ENCODE measurements at regions of chr2 and their contacts with region 1.

Region 1: GRCh38 chr2:42886921-42887320 is 94.5 kb upstream of the HAAO start:
- DNase-seq: peak; percentile 47
- ATAC-seq: no peak
- H3K4me3 ChIP-seq: no peak overlapping the region
- H3K27ac ChIP-seq: no peak overlapping the region
- H3K4me1 ChIP-seq: peaks cover 1% of the 10 kb centered on the region; the same call in 1 of the 2 replicates
- H3K27me3 ChIP-seq: no peaks in the 10 kb centered on the region; the same call in 1 of the 2 replicates
- CTCF ChIP-seq: no peak
- POLR2A ChIP-seq: no peak
- RAD21 ChIP-seq: no peak

Region 2: DNA sequence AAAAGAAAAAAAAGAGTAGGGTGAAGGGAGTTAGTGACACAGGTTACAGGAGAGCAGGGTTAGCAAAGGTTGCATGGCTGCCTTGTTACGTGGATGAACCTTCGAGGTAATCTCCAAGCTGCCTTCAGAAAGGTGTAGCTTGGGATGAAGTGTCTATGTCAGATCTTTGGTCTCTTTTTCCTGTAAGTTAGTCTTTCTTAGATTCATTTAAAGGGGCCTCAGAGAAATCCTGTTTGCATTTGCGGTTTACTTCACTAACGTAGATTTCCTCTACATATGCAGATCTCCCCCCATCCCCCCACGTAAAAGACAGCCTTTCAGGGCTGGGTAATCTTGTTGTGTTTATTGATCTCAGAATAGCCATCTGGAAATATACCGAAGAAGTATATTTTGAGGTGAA is 234.8 kb before region 1 on chr2:
- CTCF ChIA-PET with region 1: no interaction called
- POLR2A ChIA-PET with region 1: no interaction called
- dilution Hi-C with region 1: no loop called
- in situ Hi-C with region 1: no loop called
- intact Hi-C with region 1: no loop called
- DNase-seq: no peak
- ATAC-seq: no peak
- H3K4me3 ChIP-seq: no peak overlapping the region
- H3K27ac ChIP-seq: no peak overlapping the region
- H3K4me1 ChIP-seq: peaks cover 2% of the 10 kb centered on the region
- H3K27me3 ChIP-seq: no peaks in the 10 kb centered on the region
- CTCF ChIP-seq: no peak
- POLR2A ChIP-seq: no peak
- RAD21 ChIP-seq: no peak

Region 3: GRCh38 chr2:42871370-42871769 is 15.6 kb before region 1 on chr2:
- CTCF ChIA-PET with region 1: no interaction called
- POLR2A ChIA-PET with region 1: no interaction called
- dilution Hi-C with region 1: no loop called
- in situ Hi-C with region 1: no loop called
- intact Hi-C with region 1: loop called (anchors 2 kb)
- DNase-seq: no peak
- ATAC-seq: no peak
- H3K4me3 ChIP-seq: no peak overlapping the region
- H3K27ac ChIP-seq: no peak overlapping the region
- H3K4me1 ChIP-seq: no peaks in the 10 kb centered on the region; the same call in 1 of the 2 replicates
- H3K27me3 ChIP-seq: 0 out of 2 replicates have a peak, but pooled peaks cover 2% of the 10 kb centered on the region
- CTCF ChIP-seq: no peak
- POLR2A ChIP-seq: no peak
- RAD21 ChIP-seq: no peak

Region 4: DNA sequence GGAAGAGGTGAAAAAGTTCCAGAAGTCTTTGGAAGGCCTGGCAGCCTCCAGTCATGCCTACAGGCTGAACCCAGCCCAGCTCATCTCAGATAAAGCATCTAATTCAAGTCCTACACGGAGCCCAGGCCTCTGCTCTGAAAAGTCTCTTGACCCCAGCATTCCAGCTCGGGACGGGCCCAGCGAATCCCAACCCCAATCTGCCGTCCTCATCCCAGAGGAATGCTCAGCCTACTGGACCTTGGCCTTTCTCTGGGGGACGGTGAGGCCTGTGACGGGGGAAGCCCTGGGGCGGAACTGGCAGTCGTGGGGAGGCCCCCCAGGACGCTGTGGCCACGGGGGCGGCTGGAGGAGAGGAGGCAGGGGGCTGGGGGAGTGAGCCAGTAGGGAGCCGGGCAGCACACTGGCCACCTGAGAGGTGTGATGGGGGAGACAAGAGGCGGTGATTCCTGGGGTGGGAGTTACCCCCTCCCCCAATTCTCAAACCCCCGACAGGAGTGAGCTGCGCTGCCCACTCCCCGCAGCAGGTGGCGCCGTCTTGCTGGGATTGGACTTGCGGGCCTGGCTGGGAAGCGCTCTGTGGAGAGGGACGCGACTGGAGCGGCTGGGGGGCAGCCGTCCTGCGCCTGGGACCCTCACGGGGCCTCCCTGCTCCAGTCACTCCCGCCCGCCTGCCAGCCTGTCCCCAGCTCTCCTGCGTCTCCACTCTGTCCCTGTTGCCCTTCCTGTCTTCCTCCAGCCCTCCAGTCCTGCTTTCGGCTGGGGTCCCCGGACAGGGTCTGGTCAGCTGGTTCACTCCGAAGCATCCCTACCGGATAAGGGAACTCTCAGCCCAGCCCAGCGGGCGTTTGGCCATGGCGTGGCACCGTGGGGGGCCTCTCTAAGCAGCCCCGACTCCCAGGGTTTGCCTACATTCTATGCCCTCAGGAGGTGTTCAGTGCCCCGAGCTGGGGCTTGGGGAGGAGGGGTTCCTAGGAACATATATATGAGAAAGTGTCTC is 88.1 kb after region 1 on chr2:
- CTCF ChIA-PET with region 1: no interaction called
- POLR2A ChIA-PET with region 1: no interaction called
- dilution Hi-C with region 1: no loop called
- in situ Hi-C with region 1: no loop called
- intact Hi-C with region 1: no loop called
- DNase-seq: peak; percentile 63
- ATAC-seq: peak; percentile 91
- H3K4me3 ChIP-seq: peak overlapping the region; percentile 15; the same call in 1 of the 2 replicates
- H3K27ac ChIP-seq: peak overlapping the region; percentile 79
- H3K4me1 ChIP-seq: peaks cover 20% of the 10 kb centered on the region
- H3K27me3 ChIP-seq: no peaks in the 10 kb centered on the region
- CTCF ChIP-seq: peak; percentile 88
- POLR2A ChIP-seq: peak; percentile 54; the same call in 1 of the 2 replicates
- RAD21 ChIP-seq: peak; percentile 97